Activated CD4-positive, alpha-beta memory T cell treated with anti-CD3 and anti-CD28 coated beads for 36 hours (primary cell): ENCODE measurements at regions of chr10 and their contacts with region 1.

Region 1: DNA sequence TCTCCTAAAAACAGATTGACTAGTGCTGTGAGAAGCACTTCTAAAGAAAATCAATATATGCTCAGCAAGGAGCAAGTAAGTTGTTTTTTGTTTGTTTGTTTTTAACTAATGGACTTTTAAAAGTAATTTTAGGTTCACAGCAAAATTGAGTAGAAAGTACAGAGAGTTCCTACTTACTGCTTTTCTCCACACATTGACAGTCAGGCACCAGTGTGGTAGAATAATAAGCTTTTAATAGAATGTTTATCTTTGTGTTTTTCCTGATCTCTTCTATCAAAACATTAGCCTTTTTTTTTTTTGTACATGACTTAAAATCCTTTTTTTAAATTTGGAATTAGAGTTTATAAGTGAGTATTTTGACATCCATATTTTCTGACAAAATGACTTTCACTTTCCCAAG is 28.0 kb downstream of the MINPP1 start:
- DNase-seq: no peak
- H3K4me3 Mint-ChIP-seq: no peak overlapping the region
- H3K27ac Mint-ChIP-seq: no peak overlapping the region
- H3K4me1 Mint-ChIP-seq: peaks cover 16% of the 10 kb centered on the region
- H3K27me3 Mint-ChIP-seq: no peaks in the 10 kb centered on the region

Region 2: DNA sequence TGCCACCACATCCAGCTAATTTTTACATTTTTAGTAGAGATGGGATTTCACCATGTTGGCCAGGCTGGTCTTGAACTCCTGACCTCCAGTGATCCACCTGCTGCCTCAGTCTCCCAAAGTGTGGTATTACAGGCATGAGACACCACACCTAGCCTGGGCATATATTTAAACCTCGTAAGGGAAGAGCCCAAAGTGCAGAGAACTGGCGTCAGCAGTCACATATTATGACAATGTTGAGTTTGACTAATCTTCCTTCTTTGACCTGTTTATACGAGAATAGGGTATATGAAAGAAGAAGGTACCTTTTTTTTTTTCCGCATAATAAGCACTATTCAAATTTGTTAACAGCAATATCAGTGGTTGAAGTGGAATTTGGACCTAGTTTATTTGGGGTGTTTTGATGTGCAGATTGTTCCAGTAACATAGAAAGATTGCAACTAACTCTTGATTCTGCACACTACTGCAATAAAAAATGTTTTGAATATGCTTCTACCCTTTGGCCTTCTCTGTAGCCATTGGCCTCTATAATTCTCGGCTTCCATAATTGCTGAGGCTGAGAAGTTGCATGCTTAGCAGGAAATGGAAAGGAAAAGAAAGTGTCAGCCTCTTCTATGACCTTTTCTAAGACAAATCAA is 27.9 kb after region 1 on chr10:
- CTCF ChIA-PET with region 1: no interaction called
- POLR2A ChIA-PET with region 1: no interaction called
- intact Hi-C with region 1: no loop called
- DNase-seq: no peak
- H3K4me3 Mint-ChIP-seq: no peak overlapping the region
- H3K27ac Mint-ChIP-seq: no peak overlapping the region
- H3K4me1 Mint-ChIP-seq: no peaks in the 10 kb centered on the region
- H3K27me3 Mint-ChIP-seq: peaks cover 13% of the 10 kb centered on the region

Region 3: GRCh38 chr10:87734987-87735827 is 202.5 kb after region 1 on chr10:
- CTCF ChIA-PET with region 1: interaction called, 5 read pairs
- POLR2A ChIA-PET with region 1: no interaction called
- intact Hi-C with region 1: loop called (anchors 1 kb)
- DNase-seq: no peak
- H3K4me3 Mint-ChIP-seq: no peak overlapping the region
- H3K27ac Mint-ChIP-seq: no peak overlapping the region
- H3K4me1 Mint-ChIP-seq: no peaks in the 10 kb centered on the region
- H3K27me3 Mint-ChIP-seq: peaks cover 23% of the 10 kb centered on the region

Region 4: GRCh38 chr10:87771871-87772500 is 239.3 kb after region 1 on chr10:
- CTCF ChIA-PET with region 1: interaction called, 4 read pairs
- POLR2A ChIA-PET with region 1: no interaction called
- intact Hi-C with region 1: loop called (anchors 1 kb)
- DNase-seq: no peak
- H3K4me3 Mint-ChIP-seq: no peak overlapping the region
- H3K27ac Mint-ChIP-seq: no peak overlapping the region
- H3K4me1 Mint-ChIP-seq: peaks cover 7% of the 10 kb centered on the region
- H3K27me3 Mint-ChIP-seq: no peaks in the 10 kb centered on the region